ENCODE measurements at regions of chr4 and their contacts with region 1.

Region 1: DNA sequence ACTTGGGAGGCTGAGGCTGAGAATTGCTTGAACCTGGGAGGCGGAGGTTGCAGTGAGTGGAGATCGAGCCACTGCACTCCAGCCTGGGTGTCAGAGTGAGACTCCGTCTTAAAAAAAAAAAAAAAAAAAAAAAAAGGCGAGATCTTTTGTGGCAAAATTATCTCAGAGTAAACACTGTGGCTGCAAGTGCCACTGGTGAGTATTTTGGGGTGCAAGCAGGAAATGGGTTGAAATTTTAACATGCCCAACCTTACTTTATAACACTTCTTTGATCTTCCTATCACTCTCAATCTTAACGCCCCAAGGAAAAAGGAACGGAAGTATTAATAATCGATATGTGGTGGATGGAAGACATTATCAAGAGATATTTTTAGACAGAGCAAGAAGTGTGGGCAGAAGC is 32.1 kb downstream of the SLC34A2 start:
- DNase-seq: no peak
- ATAC-seq: no peak
- H3K4me3 Mint-ChIP-seq: no peak overlapping the region
- H3K27ac Mint-ChIP-seq: no peak overlapping the region
- H3K4me1 Mint-ChIP-seq: no peaks in the 10 kb centered on the region
- H3K27me3 Mint-ChIP-seq: no peaks in the 10 kb centered on the region

Region 2: DNA sequence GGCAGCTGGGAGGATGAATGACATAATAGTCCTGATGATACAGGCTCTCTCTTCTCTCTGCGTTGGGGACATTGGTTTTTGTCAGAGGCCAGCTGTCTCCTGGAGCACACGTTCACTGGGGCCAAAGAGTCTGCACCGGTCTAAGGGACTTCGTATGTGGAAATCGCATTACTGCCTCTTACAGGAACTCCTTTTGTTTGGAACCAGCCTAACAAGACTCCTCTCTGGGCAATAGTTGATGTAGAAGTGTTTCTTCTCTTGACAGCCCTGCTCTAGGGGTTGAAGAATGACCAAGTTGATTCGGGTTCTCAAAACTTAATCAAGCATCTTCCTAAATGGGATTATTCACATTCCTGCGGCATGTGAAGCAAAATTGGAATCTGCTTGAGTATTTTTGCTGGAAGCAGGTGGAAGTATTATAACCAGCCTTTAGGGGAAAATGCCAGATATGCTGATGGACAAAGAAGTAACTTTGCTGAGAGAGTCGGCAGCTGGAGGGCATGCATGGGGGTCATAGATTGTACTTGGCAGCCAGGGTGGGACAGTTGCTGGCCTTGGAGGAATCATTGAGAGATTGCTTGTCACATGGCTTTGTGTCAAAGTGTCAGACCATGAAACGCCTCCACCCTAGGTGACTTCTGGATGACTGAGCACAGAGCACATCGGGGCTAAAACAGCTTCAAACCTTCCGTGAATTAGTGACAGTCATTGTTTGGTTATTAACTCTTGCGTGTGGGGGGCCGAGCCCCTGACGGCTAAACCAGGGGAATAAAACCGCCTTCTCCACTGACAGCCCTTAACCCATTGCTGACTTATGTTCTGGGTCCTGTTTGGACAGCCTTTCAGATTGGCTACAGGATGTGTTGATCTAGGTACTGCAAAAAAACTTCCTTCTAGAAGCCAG is 66.5 kb before region 1 on chr4:
- CTCF ChIA-PET with region 1: no interaction called
- POLR2A ChIA-PET with region 1: no interaction called
- intact Hi-C with region 1: loop called in 1 of 2 experiments (anchors 10 kb)
- DNase-seq: no peak
- ATAC-seq: no peak
- H3K4me3 Mint-ChIP-seq: no peak overlapping the region
- H3K27ac Mint-ChIP-seq: no peak overlapping the region
- H3K4me1 Mint-ChIP-seq: peaks cover 2% of the 10 kb centered on the region
- H3K27me3 Mint-ChIP-seq: peaks cover 2% of the 10 kb centered on the region

Measured in activated CD4-positive, alpha-beta T cell treated with anti-CD3 and anti-CD28 coated beads for 36 hours (primary cell).